ENCODE measurements at regions of chr3 and their contacts with region 1.

Region 1: DNA sequence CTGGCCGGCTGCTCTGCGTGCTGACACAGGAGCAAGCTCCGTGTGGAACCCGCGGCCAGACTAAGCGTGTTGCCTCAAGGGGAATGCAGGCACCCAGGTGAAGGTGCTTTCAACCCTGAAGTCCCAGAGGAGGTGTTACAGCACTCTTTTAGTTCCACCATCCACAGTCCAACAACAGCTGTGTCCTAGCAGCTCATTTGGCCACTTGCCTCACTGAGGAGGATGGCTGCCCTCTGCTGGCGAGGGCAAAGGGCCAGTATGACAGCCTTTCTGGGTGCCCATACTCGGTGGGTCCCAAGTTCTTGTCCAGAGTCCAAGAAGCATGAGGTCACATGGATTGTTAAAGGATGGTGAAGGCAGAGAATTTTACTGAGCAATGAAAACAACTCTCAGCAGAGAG is 87.8 kb downstream of the C3orf85 start:
- DNase-seq: peak in 1 of 2 experiments; percentile 46
- ATAC-seq: peak; percentile 73 to 75; a peak in 5 of 6 replicates
- H3K4me3 ChIP-seq: no peak overlapping the region
- H3K27ac ChIP-seq: no peak overlapping the region
- H3K4me1 ChIP-seq: no peaks in the 10 kb centered on the region
- CTCF ChIP-seq: peak; percentile 49
- EP300 ChIP-seq: no peak
- POLR2A ChIP-seq: no peak
- RAD21 ChIP-seq: peak; percentile 57 to 64

Region 2: GRCh38 chr3:109023656-109024254 is 200.6 kb before region 1 on chr3:
- CTCF ChIA-PET with region 1: interaction called, 14 read pairs
- POLR2A ChIA-PET with region 1: no interaction called
- DNase-seq: peak; percentile 6 to 50
- ATAC-seq: peak; percentile 60 to 78; a peak in 3 of 6 replicates
- H3K4me3 ChIP-seq: no peak overlapping the region
- H3K27ac ChIP-seq: no peak overlapping the region
- H3K4me1 ChIP-seq: no peaks in the 10 kb centered on the region
- CTCF ChIP-seq: peak; percentile 90
- EP300 ChIP-seq: no peak
- POLR2A ChIP-seq: no peak
- RAD21 ChIP-seq: peak; percentile 72 to 76

Region 3: GRCh38 chr3:109252641-109253040 is 28.3 kb after region 1 on chr3:
- CTCF ChIA-PET with region 1: no interaction called
- POLR2A ChIA-PET with region 1: no interaction called
- DNase-seq: no peak
- ATAC-seq: no peak
- H3K4me3 ChIP-seq: no peak overlapping the region
- H3K27ac ChIP-seq: no peak overlapping the region
- H3K4me1 ChIP-seq: no peaks in the 10 kb centered on the region
- CTCF ChIP-seq: no peak
- EP300 ChIP-seq: no peak
- POLR2A ChIP-seq: no peak
- RAD21 ChIP-seq: no peak

Region 4: DNA sequence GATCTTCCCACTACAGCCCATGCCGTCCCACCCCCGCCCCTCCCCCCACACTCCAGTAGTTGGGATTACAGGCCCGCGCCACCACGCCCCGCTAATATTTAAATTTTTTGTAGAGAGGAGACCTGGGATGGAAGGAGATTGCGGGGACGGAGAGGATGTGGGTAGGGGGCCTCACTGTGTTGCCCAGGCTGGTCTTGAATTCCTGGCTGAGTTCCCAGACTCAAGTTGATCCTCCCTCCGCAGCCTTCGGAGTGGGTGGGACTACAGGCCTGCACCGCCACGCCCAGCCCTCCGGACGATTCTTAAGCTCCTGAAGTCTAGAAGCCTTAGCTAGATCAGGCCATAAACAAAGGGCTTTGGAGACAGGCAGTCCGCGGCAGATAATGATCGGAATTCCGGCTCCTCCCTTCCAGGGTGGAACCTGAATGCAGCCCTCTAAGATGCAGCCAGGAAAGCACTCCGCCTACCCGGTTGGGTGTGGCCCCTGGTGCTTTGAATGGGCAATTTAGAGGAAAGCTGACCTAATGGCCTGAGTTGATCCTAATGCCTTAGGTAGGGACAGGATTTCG is 91.9 kb after region 1 on chr3 and contains the start of gene DPPA2:
- CTCF ChIA-PET with region 1: no interaction called
- POLR2A ChIA-PET with region 1: no interaction called
- DNase-seq: no peak
- ATAC-seq: no peak
- H3K4me3 ChIP-seq: no peak within 1 kb of the TSS
- H3K27ac ChIP-seq: no peak within 1 kb of the TSS
- H3K4me1 ChIP-seq: no peaks in the 10 kb centered on the region
- CTCF ChIP-seq: no peak
- EP300 ChIP-seq: no peak
- POLR2A ChIP-seq: no peak
- RAD21 ChIP-seq: no peak
- polyA plus RNA-seq, gene DPPA2: not detected in 2 replicates

Measured in A549 (cell line).